ENCODE measurements at regions of chr12 and their contacts with region 1.

Region 1: DNA sequence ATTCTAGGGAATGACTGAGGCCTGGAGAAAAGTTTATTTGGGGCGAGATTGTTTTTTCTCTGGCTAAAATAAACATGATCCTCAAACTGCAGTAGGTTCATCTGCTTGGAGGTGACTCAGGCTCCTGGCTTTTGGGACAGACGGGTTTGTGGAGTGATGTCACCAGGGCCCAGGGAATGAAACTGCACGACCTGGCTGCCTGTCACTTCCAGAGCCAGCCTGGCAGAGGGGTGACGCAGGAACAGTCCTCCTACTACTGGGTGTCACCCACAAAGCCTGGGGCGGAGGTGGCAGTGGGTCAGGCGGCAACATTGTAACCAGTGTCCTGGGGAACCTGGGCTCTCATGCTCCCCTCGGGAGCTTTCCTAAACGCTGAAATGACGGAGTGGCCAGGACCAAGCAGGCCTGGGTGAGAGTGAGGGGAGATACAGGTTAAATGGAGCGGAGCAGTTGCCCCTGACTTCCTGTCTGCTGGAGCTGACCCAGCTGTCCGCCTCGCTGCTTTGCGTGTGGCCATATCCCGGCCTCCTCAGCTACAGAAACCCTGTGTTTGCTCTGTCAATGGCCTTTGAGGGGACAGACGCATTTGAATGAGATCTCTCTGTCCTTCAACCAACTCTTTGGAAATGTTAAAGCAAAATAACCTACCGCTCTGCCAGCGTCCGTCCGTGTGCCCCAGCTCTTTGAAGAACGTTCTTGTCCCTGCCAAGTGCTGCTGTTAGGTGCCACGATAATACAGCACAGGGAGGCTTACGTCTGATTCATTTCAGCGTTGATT is 6.5 kb downstream of the HIP1R start:
- DNase-seq: peak; percentile 66
- ATAC-seq: peak; percentile 71
- H3K4me3 ChIP-seq: peak overlapping the region; percentile 32 to 58 (median 52)
- H3K27ac ChIP-seq: peak overlapping the region; percentile 37
- H3K4me1 ChIP-seq: peaks cover 81% of the 10 kb centered on the region
- H3K27me3 ChIP-seq: no peaks in the 10 kb centered on the region; a peak in 1 of 5 replicates
- CTCF ChIP-seq: no peak
- EP300 ChIP-seq: no peak
- POLR2A ChIP-seq: no peak
- RAD21 ChIP-seq: no peak

Region 2: DNA sequence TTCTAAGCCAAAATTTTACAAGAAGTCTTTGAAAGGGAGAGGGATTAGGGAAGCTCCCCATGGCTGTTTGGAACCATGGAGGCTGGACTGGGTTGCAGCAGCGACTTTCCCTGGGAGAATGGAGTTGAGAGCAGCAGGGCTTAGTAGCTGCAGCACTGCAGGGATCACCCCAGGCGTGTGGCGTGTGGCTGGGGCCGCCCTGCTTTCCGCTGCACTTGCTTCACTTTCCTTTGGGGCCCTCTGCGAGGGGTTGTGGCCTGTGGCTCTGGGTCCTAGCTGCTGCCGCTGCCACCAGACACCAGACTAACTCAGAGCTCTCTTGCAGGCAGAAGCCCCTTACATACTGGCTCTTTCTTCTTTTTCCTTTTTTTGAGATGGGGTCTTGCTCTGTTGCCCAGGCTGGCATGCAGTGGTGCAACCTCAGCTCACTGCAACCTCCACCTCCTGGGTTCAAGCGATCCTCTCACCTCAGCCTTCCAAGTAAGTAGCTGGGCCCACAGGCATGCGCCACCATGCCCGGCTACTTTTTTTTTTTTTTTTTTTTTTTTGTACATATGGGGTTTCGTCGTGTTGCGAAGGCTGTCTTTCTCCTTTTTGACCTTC is 42.0 kb before region 1 on chr12:
- CTCF ChIA-PET with region 1: no interaction called
- POLR2A ChIA-PET with region 1: no interaction called
- in situ Hi-C with region 1: no loop called
- intact Hi-C with region 1: loop called (anchors 5 kb)
- DNase-seq: no peak
- ATAC-seq: peak; percentile 80
- H3K4me3 ChIP-seq: no peak overlapping the region
- H3K27ac ChIP-seq: no peak overlapping the region
- H3K4me1 ChIP-seq: 0 out of 2 replicates have a peak, but pooled peaks cover 8% of the 10 kb centered on the region
- H3K27me3 ChIP-seq: peaks cover 0 to 8% of the 10 kb centered on the region in 2 experiments; a peak in 3 of 5 replicates
- CTCF ChIP-seq: no peak
- EP300 ChIP-seq: no peak
- POLR2A ChIP-seq: no peak
- RAD21 ChIP-seq: no peak